Activated T-helper 2 cell treated with anti-CD3 and anti-CD28 coated beads, Interferon-gamma antibody, Interleukin-2, Interleukin-4, amounts not matched to agents 10 μg/mL and 5 μg/mL and 100 μg/mL, durations not matched to agents 14 hours and 24 hours and 36 hours (primary cell): ENCODE measurements at regions of chr5 and their contacts with region 1.

Region 1: GRCh38 chr5:139765409-139766217 is 30.0 kb upstream of the PSD2 start:
- DNase-seq: peak; percentile 68
- H3K4me3 Mint-ChIP-seq: peak overlapping the region; percentile 56
- H3K27ac Mint-ChIP-seq: no peak overlapping the region
- H3K4me1 Mint-ChIP-seq: peaks cover 8% of the 10 kb centered on the region
- H3K27me3 Mint-ChIP-seq: peaks cover 39% of the 10 kb centered on the region

Region 2: GRCh38 chr5:139593716-139594319 is 171.8 kb before region 1 on chr5:
- intact Hi-C with region 1: no loop called
- DNase-seq: no peak
- H3K4me3 Mint-ChIP-seq: no peak overlapping the region
- H3K27ac Mint-ChIP-seq: no peak overlapping the region
- H3K4me1 Mint-ChIP-seq: peaks cover 17% of the 10 kb centered on the region
- H3K27me3 Mint-ChIP-seq: no peaks in the 10 kb centered on the region

Region 3: GRCh38 chr5:139745800-139746690 is 19.6 kb before region 1 on chr5:
- intact Hi-C with region 1: loop called (anchors 2 kb)
- DNase-seq: no peak
- H3K4me3 Mint-ChIP-seq: peak overlapping the region; percentile 77
- H3K27ac Mint-ChIP-seq: no peak overlapping the region
- H3K4me1 Mint-ChIP-seq: peaks cover 16% of the 10 kb centered on the region
- H3K27me3 Mint-ChIP-seq: peaks cover 30% of the 10 kb centered on the region